Posterior vena cava (tissue), 2 donors: ENCODE measurements at regions of chr20 and their contacts with region 1.

Region 1: DNA sequence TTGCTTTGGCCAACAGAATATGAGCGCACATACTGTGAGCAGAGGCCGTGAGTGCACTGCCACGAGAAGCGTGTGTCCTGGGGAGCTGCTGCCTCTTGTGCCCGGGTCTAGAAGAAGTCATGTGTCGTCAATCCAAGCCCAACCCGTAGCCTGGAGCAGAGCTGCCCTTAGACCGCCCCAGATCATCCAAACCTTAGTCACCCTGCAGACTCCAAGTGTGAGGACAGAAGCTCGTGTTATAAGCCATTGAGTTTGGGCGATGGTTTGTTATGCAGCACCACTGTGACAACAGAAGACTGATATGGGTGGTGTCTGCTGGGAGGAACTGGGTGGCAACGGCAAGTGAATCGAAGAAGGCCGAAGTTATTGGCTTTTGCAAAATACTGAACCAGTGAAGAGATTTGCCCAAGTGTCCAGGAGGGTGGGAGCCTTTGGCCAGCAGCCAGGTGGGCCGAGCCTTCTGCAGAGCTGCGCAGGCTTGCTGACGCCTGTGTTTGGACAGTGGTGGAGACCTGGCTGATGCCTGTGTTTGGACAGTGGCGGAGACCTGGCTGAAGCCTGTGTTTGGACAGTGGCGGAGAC is 101.3 kb upstream of the SULF2 start:
- DNase-seq: no peak

Region 2: GRCh38 chr20:45957081-45957941 is 1929.2 kb before region 1 on chr20:
- intact Hi-C with region 1: no loop called
- DNase-seq: peak; percentile 68

Region 3: DNA sequence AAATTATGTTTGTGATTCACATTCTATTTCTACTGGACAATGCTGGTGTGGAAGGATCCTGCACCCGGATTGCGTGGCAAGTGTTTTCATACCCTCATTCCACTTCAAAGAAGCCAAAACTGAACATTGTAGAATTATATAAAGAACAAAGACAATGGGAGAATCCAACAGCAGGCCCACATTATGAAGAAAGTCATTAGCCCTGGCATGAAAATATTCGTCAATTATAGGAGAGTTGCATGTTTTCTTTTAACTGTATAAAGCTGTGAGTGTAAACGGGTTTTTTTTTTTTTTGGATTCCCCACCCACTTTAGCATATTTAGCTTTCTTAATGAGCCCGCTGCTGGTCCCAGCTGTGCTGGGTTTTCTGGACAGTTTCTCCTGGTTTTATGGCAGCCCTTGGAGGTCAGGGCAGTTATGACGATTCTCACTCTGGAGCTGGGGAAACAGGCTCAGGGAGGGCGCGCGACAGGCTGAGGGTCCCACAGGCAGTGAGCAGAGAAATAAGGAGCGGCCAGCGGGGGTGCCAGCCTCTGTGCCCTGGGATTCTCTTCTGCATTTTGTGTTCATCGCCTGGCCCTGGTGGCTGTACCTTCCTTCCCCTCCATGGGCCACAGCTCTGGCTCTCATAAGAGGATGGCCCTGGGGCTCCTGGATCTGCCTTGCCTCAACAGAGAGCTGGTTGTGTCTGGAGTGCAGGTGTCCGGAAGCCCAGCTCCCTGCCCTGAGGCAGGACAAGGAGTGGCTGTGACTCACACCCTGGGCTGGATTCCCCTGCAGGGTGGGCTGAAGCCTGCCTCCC is 77.2 kb before region 1 on chr20:
- intact Hi-C with region 1: loop called in 1 of 2 experiments (anchors 10 kb)
- DNase-seq: peak; percentile 69

Region 4: DNA sequence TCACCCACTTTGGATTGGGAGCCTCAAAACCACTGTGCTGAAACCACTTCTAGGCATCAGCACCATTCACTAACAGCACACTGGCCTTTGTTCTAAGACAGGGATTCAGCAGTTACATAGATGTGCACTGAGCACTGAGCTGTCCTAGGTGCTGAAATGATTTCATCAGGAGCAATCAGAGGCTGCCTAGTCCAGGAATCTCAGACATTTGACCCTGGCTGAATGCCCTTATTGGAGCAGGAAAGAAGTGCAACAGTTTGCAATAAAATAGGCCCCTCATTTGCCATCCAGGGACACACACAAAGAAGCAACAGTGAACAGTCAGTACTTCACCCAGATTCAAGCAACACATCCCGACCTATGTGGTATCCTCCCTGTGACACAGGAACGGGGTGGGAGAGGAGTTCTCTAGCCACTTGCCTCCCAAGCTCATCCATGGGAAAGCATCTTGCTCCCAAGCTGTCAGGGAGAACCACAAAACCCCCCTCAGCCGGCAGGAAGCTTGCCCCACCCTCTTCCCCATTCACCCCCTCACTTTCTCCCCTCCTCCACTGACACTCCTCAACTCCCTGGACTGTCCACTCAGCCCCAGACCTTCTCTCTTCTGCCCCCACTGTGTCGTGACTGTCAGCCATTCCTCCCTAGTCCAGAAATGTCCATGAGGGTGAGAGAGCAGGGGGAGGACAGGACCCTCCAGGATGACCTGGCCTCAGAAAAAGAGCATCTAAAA is 636.8 kb after region 1 on chr20:
- intact Hi-C with region 1: loop called in 1 of 2 experiments (anchors 5 kb)
- DNase-seq: no peak